Activated naive CD4-positive, alpha-beta T cell treated with anti-CD3 and anti-CD28 coated beads, Interleukin-2, amount 10 ng/mL, durations not matched to agents 7 days and 5 days (primary cell): ENCODE measurements at regions of chr3 and their contacts with region 1.

Region 1: DNA sequence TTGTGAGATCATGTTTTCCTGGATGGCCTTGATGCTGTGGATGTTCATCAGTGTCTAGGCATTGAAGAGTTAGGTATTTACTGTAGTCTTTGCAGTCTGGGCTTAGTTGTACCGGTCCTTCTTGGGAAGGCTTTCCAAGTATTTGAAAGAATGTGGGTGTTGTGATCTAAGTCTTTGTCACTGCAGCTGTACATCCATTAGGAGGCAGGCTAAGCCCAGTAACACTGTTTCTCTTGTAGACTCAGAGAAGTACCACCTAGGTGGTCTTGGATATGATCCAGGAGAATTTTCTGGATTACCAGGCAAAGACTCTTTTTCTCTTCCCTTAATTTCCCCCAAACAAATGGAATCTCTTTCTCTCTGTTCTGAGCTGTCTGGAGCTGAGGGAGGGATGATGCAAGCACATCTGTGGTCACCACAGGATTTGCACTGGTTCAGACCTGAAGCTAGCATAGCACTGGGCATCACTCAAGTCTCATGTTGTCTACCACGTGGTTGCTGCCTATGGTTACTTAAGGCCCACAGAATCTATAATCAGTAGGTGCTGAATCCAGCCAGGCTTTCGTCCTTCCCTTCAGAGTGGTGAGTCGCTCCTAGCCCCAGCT is 227.6 kb downstream of the NECTIN3 start:
- DNase-seq: no peak
- H3K4me3 Mint-ChIP-seq: no peak overlapping the region
- H3K27ac Mint-ChIP-seq: no peak overlapping the region
- H3K4me1 Mint-ChIP-seq: peaks cover 23% of the 10 kb centered on the region
- H3K27me3 Mint-ChIP-seq: peaks cover 5% of the 10 kb centered on the region

Region 2: DNA sequence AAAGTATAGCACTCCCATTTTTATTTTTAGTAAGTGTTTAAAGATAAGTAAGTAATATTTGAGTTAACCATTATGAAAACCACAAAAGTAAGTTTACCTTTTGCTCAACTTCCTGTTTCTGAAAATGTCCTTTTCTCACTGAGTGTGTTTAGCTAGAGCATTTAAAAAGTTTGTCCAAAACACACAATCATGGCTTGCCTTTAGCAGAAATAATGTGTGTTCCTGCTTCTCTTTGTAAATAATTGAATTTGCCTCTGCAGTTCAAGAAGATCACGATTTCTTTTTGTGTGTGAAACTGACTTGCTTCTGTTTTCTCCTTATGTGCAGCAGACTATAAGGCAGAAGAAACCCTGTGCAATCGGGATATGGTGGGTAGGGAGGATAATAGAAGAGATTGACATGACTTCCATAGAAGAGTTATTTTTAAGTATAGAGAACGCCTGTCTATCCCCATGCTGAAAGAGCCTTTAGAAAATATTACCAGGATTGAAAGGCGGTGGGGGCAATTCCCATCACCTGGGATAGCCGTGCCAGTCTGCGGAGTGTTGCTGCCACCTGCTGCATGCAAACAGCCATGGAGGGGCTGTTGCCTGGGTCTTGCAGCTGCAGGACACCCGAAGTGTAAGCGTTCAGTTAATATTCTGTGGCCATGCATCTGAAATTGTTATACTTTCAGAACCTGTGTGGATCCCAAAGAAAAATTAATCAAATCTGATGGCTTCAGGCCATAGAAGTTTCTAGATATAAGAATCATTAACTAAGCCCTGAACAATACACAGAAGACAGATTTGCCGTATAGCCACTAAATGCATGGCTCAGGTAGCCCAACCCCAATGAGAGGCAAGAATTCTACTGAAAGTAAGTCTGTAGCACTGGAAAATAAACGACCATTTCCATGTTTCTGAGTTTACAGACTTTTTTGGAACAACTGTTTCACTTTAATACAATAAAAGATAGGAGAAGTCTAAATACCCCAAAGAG is 240.5 kb after region 1 on chr3:
- CTCF ChIA-PET with region 1: interaction called, 10 read pairs
- DNase-seq: peak; percentile 79
- H3K4me3 Mint-ChIP-seq: peak overlapping the region; percentile 64
- H3K27ac Mint-ChIP-seq: peak overlapping the region; percentile 90
- H3K4me1 Mint-ChIP-seq: peaks cover 54% of the 10 kb centered on the region
- H3K27me3 Mint-ChIP-seq: no peaks in the 10 kb centered on the region